Head of caudate nucleus (tissue), 42 donors: ENCODE measurements at regions of chr14 and their contacts with region 1.

Region 1: GRCh38 chr14:100645192-100645990 is 58.2 kb upstream of the BEGAIN start:
- DNase-seq: peak; percentile 69 to 93 (median 80)

Region 2: DNA sequence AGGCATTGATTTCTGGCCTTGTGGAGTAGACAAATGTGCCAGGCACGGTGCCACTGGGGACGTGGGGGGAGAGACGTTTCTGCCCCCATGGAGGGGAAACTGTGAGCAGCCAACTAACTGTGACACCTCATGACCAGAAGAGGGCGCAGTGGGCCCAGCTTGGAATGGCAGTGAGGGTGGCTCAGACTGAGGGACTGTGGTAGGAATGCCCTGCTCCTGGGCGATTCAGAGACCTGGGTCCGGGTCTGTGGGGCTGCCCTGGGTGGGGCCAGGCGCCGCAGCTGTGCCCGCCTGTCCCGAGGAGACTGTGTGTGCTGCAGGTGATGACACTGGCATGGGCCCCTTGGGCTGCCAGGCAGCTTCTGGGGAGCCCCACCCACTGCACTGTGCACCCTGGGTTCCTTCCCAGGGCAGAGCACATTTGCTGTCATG is 261.6 kb before region 1 on chr14:
- intact Hi-C with region 1: loop called (anchors 5 kb)
- DNase-seq: peak; percentile 45 to 85 (median 70)

Region 3: DNA sequence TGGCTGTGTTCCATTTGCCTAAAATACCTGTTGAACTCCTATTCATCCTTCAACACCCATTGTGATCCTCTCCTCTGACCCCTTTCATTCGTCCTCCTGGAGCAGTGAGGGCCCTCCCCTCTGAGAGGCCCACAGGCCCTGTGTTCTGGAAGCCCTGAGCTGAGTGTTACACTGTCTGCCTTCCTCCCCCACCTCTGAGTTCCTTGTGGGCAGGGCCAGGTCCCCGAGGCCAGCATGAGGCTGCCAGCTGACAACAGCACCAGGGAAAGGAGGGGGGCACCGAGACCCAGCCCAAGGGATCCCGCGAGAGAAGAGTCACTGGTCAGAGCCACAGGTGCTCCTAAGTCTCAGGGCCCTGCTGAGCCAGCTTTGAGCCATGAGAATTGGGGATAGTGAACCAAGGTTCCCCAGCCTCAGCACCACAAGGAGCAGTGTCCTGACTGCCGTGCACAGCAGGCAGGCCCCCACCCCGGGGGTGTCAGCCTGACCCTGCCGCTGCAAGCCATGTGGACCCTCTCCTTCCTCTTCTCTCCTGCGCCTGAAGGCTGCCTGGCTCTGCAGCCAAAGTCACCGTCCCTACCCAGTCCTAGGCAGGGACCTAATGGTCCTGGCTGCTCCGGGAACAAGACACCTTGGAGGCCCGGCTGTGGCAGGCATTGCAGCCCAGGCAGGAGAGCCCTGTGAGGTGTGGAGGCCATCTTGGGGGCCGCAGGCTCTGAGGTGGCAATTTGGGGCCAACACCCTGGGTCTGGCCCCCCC is 110.7 kb before region 1 on chr14:
- intact Hi-C with region 1: loop called (anchors 5 kb)
- DNase-seq: peak in 27 of 42 donors; percentile 0 to 30 (median 7)

Region 4: GRCh38 chr14:100610511-100611217 is 34.7 kb before region 1 on chr14:
- intact Hi-C with region 1: no loop called
- DNase-seq: peak in 5 of 42 donors; percentile 5 to 28 (median 9)